MCF 10A (cell line): ENCODE measurements at regions of chr10 and their contacts with region 1.

Region 1: GRCh38 chr10:4678023-4678950 is 147.7 kb upstream of the AKR1E2 start:
- DNase-seq: peak; percentile 81
- H3K4me3 Mint-ChIP-seq: peak overlapping the region; percentile 58
- H3K27ac Mint-ChIP-seq: peak overlapping the region; percentile 90
- H3K4me1 Mint-ChIP-seq: peaks cover 33% of the 10 kb centered on the region
- H3K27me3 Mint-ChIP-seq: no peaks in the 10 kb centered on the region
- CTCF ChIP-seq: no peak

Region 2: DNA sequence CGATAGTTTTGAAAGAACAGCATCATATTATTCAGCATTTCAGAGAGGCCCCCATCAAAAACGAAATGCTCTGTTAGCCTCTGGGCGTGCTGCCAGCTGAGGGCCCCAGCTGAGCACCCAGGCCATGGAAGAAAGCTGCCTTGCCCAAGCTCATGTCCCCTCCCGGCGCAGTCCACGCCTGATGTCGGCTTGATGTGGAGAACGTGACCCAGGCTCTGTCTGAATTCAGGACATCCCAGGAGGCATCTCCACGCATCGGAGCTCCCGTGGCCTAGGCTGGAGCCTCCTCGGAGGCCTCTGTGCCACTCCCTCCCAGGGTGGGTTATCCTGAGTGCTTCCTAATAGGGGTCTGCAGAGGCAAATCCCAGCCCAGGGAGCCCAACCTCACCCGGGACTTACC is 70.6 kb before region 1 on chr10:
- CTCF ChIA-PET with region 1: no interaction called
- POLR2A ChIA-PET with region 1: no interaction called
- intact Hi-C with region 1: no loop called
- DNase-seq: no peak
- H3K4me3 Mint-ChIP-seq: no peak overlapping the region
- H3K27ac Mint-ChIP-seq: no peak overlapping the region
- H3K4me1 Mint-ChIP-seq: no peaks in the 10 kb centered on the region
- H3K27me3 Mint-ChIP-seq: no peaks in the 10 kb centered on the region
- CTCF ChIP-seq: no peak

Region 3: DNA sequence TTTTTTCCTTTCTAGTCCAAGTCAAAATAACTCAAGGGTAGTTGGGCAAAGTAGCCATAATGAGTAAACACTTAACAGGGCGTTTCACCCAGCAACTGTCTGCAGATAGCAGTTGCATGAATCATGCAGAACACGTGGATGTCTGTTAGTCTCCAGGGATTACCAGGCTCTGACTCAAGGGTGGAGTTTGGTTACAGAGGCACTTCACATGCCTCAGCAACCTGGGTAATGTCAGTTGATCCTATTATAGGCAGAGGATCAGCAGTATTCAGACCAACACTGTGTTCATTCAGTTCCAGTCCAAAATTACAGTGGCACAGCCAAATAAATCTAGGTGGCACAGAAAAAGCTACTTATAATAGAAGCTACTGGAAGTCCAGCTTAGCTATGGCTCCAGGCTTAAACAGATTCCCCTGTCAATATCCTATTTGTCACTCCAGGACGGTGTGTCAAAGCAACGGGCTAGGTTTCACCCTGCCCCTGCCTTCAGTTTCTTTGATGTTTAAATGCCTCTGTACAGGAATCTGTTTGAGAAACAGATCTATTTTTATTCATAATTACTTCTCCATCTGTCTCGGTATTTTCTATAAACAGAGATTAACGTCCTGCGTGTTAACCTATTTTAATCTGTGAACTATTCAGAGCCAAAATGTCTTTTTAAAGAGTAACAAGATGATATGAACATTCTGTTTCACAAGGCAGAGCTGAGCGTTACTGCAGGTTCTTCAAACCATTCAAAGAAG is 15.0 kb before region 1 on chr10:
- CTCF ChIA-PET with region 1: interaction called, 3 read pairs
- POLR2A ChIA-PET with region 1: interaction called, 103 read pairs
- intact Hi-C with region 1: no loop called
- DNase-seq: peak; percentile 99
- H3K4me3 Mint-ChIP-seq: peak overlapping the region; percentile 66
- H3K27ac Mint-ChIP-seq: peak overlapping the region; percentile 100
- H3K4me1 Mint-ChIP-seq: peaks cover 28% of the 10 kb centered on the region
- H3K27me3 Mint-ChIP-seq: no peaks in the 10 kb centered on the region
- CTCF ChIP-seq: no peak

Region 4: GRCh38 chr10:4691776-4692175 is 13.5 kb after region 1 on chr10:
- CTCF ChIA-PET with region 1: no interaction called
- POLR2A ChIA-PET with region 1: interaction called, 33 read pairs
- intact Hi-C with region 1: no loop called
- DNase-seq: peak; percentile 32
- H3K4me3 Mint-ChIP-seq: no peak overlapping the region
- H3K27ac Mint-ChIP-seq: peak overlapping the region; percentile 97
- H3K4me1 Mint-ChIP-seq: peaks cover 31% of the 10 kb centered on the region
- H3K27me3 Mint-ChIP-seq: no peaks in the 10 kb centered on the region
- CTCF ChIP-seq: no peak

Region 5: DNA sequence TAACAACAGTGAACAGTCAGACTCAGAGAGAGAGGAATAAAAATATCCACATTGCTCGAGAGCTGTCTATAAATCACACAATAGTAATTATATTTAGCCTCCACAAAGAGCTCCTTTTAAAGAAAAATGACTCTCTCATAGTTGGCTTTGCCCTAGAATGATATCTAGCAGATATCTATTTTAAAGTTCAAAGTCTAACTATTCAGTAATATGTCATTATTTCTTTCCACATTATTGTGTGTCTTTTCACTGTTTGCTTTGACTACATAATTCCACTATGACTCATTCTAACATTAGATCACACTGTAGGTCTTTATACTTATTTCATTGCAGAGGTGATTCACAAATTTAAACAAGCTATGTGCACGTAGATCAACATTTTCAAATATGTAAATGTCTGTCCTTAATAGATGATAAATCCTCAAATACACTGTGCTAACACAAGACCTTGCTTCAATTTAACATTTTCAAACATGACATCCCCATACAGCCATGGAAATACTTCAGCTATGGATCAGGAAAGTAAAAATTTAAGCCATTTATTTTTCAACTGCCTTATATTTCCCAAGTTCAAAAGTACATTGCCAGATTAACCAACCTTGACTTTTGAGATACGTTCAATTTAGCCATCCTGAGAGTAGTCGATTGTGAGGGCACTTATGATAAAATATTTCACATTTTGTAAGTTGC is 47.8 kb after region 1 on chr10:
- CTCF ChIA-PET with region 1: no interaction called
- POLR2A ChIA-PET with region 1: interaction called, 17 read pairs
- intact Hi-C with region 1: loop called (anchors 5 kb)
- DNase-seq: peak; percentile 65
- H3K4me3 Mint-ChIP-seq: no peak overlapping the region
- H3K27ac Mint-ChIP-seq: peak overlapping the region; percentile 91
- H3K4me1 Mint-ChIP-seq: peaks cover 12% of the 10 kb centered on the region
- H3K27me3 Mint-ChIP-seq: no peaks in the 10 kb centered on the region
- CTCF ChIP-seq: no peak